Vagina (tissue), 2 donors: ENCODE measurements at regions of chr14 and their contacts with region 1.

Region 1: DNA sequence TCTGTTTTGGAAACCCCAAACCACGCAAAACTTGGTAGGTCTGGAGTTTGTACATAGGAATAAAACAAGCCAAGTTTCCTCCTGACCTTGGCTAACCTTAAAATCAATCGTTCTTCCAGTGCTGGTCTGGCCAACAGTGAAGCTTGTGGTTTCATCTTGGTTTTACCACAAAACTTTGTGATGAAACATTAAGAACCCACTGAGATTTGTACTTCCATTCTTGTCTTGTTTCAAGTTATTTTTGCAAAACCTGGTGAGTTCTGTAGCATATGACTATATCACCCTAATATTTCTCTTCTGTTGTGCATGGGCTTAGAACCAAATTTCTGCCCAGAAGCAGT is 26.4 kb downstream of the SIX1 start:
- DNase-seq: no peak
- H3K4me3 ChIP-seq: no peak overlapping the region
- H3K27ac ChIP-seq: no peak overlapping the region
- H3K4me1 ChIP-seq: peaks cover 8% of the 10 kb centered on the region
- H3K27me3 ChIP-seq: no peaks in the 10 kb centered on the region
- CTCF ChIP-seq: no peak
- POLR2A ChIP-seq: no peak

Region 2: GRCh38 chr14:60455875-60456274 is 167.0 kb before region 1 on chr14:
- intact Hi-C with region 1: no loop called
- DNase-seq: no peak
- H3K4me3 ChIP-seq: no peak overlapping the region
- H3K27ac ChIP-seq: no peak overlapping the region
- H3K4me1 ChIP-seq: no peaks in the 10 kb centered on the region
- H3K27me3 ChIP-seq: no peaks in the 10 kb centered on the region
- CTCF ChIP-seq: no peak
- POLR2A ChIP-seq: no peak

Region 3: DNA sequence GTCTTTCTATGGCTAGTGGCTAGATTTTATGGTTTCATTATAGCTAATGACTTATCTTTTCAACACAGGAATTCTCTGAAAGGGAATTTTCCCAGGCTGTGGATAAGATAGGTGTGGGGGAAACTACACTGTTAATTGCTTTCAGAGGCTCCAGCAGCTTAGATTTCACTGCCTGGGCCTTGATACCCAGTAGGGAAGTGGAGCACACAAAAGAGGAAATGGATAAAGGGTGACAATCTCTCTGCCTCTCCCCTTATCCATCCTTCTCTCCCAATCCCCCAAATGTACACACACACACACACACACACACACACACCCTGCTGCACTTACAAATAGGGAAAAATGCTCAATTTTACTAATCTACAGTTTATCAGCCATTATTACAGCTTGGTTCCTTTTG is 82.2 kb after region 1 on chr14:
- intact Hi-C with region 1: no loop called
- DNase-seq: no peak
- H3K4me3 ChIP-seq: no peak overlapping the region
- H3K27ac ChIP-seq: no peak overlapping the region
- H3K4me1 ChIP-seq: no peaks in the 10 kb centered on the region
- H3K27me3 ChIP-seq: no peaks in the 10 kb centered on the region
- CTCF ChIP-seq: no peak
- POLR2A ChIP-seq: no peak

Region 4: GRCh38 chr14:61025251-61026223 is 402.6 kb after region 1 on chr14:
- intact Hi-C with region 1: loop called (anchors 10 kb)
- DNase-seq: no peak
- H3K4me3 ChIP-seq: no peak overlapping the region
- H3K27ac ChIP-seq: no peak overlapping the region
- H3K4me1 ChIP-seq: no peaks in the 10 kb centered on the region
- H3K27me3 ChIP-seq: no peaks in the 10 kb centered on the region
- CTCF ChIP-seq: peak; percentile 53 to 74 (median 66)
- POLR2A ChIP-seq: no peak